Activated CD4-positive, alpha-beta T cell treated with anti-CD3 and anti-CD28 coated beads for 36 hours (primary cell): ENCODE measurements at regions of chr18 and their contacts with region 1.

Region 1: GRCh38 chr18:30971338-30971956 is 71.1 kb downstream of the DSC3 start:
- DNase-seq: no peak
- ATAC-seq: no peak
- H3K4me3 Mint-ChIP-seq: no peak overlapping the region
- H3K27ac Mint-ChIP-seq: no peak overlapping the region
- H3K4me1 Mint-ChIP-seq: no peaks in the 10 kb centered on the region
- H3K27me3 Mint-ChIP-seq: no peaks in the 10 kb centered on the region

Region 2: DNA sequence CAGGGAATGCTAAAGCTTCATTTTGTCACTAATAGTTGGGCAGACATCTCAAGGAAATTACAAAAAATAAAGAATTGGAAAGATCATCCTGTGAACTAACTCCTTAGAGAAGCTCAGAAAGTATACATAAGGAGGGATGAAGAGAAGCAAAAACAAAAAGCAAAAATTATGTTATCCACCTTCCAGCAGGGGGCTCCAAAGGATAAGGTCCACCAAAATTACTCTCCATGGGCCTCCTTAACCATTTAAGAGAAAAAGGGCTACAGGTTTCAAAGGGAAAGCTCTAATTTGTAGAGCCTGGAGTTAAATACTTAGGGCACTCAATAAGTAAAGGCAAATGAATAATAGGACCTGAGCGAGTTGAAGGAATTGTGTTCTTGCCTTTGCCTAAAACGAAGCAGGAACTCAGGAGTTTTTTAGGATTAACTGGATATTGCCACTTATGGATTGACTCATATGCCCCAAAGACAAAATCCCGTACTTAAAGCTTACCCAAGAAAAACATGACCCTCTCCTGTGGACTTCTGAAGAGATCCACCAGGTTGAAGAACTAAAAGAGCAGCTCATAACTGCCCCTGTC is 1096.8 kb before region 1 on chr18:
- CTCF ChIA-PET with region 1: no interaction called
- POLR2A ChIA-PET with region 1: no interaction called
- intact Hi-C with region 1: loop called in 1 of 2 experiments (anchors 2 kb)
- DNase-seq: no peak
- ATAC-seq: no peak
- H3K4me3 Mint-ChIP-seq: no peak overlapping the region
- H3K27ac Mint-ChIP-seq: no peak overlapping the region
- H3K4me1 Mint-ChIP-seq: no peaks in the 10 kb centered on the region
- H3K27me3 Mint-ChIP-seq: no peaks in the 10 kb centered on the region

Region 3: GRCh38 chr18:30982285-30982992 is 11.0 kb after region 1 on chr18:
- CTCF ChIA-PET with region 1: interaction called, 11 read pairs
- POLR2A ChIA-PET with region 1: no interaction called
- intact Hi-C with region 1: no loop called
- DNase-seq: no peak
- ATAC-seq: no peak
- H3K4me3 Mint-ChIP-seq: no peak overlapping the region
- H3K27ac Mint-ChIP-seq: no peak overlapping the region
- H3K4me1 Mint-ChIP-seq: no peaks in the 10 kb centered on the region
- H3K27me3 Mint-ChIP-seq: no peaks in the 10 kb centered on the region